Activated CD4-positive, alpha-beta T cell treated with anti-CD3 and anti-CD28 coated beads, Interleukin-2, amount 10 ng/mL, durations not matched to agents 24 days and 14 days (primary cell): ENCODE measurements at regions of chr7 and their contacts with region 1.

Region 1: GRCh38 chr7:21542891-21543527 is at the start of gene DNAH11:
- DNase-seq: peak; percentile 86
- H3K4me3 Mint-ChIP-seq: peak within 1 kb of the TSS; percentile 81
- H3K27ac Mint-ChIP-seq: peak within 1 kb of the TSS; percentile 39
- H3K4me1 Mint-ChIP-seq: peaks cover 16% of the 10 kb centered on the region
- H3K27me3 Mint-ChIP-seq: peaks cover 43% of the 10 kb centered on the region
- total RNA-seq, gene DNAH11: 3.0 and 6.1 TPM in 2 replicates

Region 2: DNA sequence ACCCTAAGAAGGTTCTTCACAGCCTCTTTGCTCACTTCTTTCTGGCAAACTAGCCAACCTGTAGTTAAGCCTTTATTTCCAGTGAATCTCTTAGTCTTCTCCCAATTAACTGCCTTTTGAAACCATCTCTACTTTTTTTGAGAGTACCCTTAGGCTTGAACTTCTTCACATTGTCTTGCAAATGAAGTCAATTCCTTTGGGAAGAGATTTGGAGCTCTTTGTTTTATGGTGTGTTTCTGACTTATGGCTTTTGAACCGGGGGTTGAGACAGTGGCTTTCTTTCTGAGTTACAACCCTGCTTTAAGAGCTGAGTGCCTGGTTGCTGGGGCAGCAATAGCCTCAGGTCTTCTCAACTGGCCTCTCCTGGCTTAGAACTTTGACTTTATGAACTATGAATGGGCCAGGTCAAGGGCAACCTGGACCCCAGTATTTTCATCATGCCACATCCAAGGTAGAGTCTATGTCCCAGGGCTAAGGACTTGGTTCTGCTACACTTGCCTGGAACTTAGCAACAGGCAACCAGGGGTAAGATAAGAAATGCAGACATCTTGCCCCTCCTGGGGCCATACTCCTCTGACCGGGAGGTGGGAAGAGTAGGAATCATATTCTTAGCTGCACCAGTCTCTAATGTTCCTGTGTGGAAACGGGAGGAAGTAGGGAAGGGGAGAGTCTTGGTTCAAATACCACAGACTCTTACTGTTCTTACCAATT is 62.2 kb before region 1 on chr7:
- intact Hi-C with region 1: no loop called
- DNase-seq: no peak
- H3K4me3 Mint-ChIP-seq: no peak overlapping the region
- H3K27ac Mint-ChIP-seq: peak overlapping the region; percentile 51
- H3K4me1 Mint-ChIP-seq: peaks cover 19% of the 10 kb centered on the region
- H3K27me3 Mint-ChIP-seq: no peaks in the 10 kb centered on the region

Region 3: DNA sequence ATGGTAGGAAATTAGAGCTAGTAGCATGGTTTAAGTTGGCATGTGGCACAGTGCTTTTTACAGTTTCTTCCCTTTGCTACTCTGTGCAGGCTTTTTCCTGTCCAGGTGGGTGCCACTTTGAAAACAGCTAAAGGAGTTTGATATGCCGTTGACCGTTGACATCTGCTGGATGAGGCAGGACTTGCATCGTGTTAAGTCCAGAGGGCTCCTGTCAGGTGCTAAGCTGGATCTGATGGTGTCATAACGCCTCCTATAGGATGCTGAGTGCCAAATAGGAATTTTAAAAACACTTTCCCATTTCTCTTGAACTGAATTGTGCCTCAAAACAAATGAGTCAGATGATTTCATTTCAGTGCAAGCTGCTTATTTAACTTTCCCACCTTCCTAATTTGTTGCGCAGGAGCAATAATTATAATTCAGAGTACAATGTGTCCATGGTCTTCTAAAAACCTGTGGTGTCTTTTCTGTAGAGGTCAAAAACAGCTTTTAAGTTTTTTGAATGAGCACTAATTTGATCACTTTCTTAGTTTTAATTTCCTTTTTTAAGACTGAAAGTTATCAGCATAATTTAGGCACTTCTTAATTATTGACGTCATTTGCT is 224.4 kb after region 1 on chr7:
- intact Hi-C with region 1: loop called (anchors 10 kb)
- DNase-seq: peak; percentile 79
- H3K4me3 Mint-ChIP-seq: no peak overlapping the region
- H3K27ac Mint-ChIP-seq: no peak overlapping the region
- H3K4me1 Mint-ChIP-seq: peaks cover 18% of the 10 kb centered on the region
- H3K27me3 Mint-ChIP-seq: peaks cover 14% of the 10 kb centered on the region